Caco-2 (cell line): ENCODE measurements at regions of chr14 and their contacts with region 1.

Region 1: GRCh38 chr14:74349757-74350156 is 1.5 kb downstream of the VRTN start:
- DNase-seq: peak; percentile 90 to 94
- H3K4me3 ChIP-seq: peak overlapping the region; percentile 4; the same call in 1 of the 2 replicates
- H3K4me3 Mint-ChIP-seq: peak overlapping the region; percentile 65
- H3K27ac Mint-ChIP-seq: peak overlapping the region; percentile 84
- H3K4me1 ChIP-seq: peaks cover 50% of the 10 kb centered on the region
- H3K4me1 Mint-ChIP-seq: peaks cover 33% of the 10 kb centered on the region
- H3K27me3 ChIP-seq: no peaks in the 10 kb centered on the region
- H3K27me3 Mint-ChIP-seq: no peaks in the 10 kb centered on the region
- CTCF ChIP-seq: no peak

Region 2: GRCh38 chr14:74109369-74109768 is 240.4 kb before region 1 on chr14:
- CTCF ChIA-PET with region 1: no interaction called
- POLR2A ChIA-PET with region 1: no interaction called
- intact Hi-C with region 1: no loop called
- DNase-seq: no peak
- H3K4me3 ChIP-seq: no peak overlapping the region
- H3K4me3 Mint-ChIP-seq: no peak overlapping the region
- H3K27ac Mint-ChIP-seq: no peak overlapping the region
- H3K4me1 ChIP-seq: no peaks in the 10 kb centered on the region
- H3K4me1 Mint-ChIP-seq: no peaks in the 10 kb centered on the region
- H3K27me3 ChIP-seq: no peaks in the 10 kb centered on the region
- H3K27me3 Mint-ChIP-seq: no peaks in the 10 kb centered on the region
- CTCF ChIP-seq: no peak

Region 3: DNA sequence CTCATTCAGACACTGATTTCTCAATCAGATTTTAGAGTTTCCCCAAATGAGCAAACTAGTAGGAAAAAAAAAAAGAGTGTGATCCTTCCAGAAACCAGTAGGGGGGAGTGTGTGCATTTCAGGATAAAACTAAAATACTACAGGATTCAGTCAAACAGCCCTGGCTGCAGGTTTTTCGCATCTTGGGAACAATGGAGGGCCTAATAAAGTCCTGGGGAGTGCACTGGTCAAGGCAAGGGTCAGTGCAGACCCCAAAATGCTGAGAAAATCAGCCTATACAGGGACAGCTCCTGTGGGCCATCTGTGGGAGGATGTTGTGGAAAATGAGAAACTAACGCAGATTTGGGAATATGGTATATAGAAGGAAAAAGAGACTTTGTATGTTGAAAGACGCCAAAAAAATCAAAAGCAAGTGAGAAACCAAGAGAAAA is 24.8 kb before region 1 on chr14:
- CTCF ChIA-PET with region 1: interaction called, 4 read pairs
- POLR2A ChIA-PET with region 1: interaction called, 5 read pairs
- intact Hi-C with region 1: loop called (anchors 1 kb)
- DNase-seq: peak in 1 of 2 experiments; percentile 51
- H3K4me3 ChIP-seq: no peak overlapping the region
- H3K4me3 Mint-ChIP-seq: no peak overlapping the region
- H3K27ac Mint-ChIP-seq: no peak overlapping the region
- H3K4me1 ChIP-seq: peaks cover 8% of the 10 kb centered on the region
- H3K4me1 Mint-ChIP-seq: peaks cover 19% of the 10 kb centered on the region
- H3K27me3 ChIP-seq: no peaks in the 10 kb centered on the region
- H3K27me3 Mint-ChIP-seq: peaks cover 4% of the 10 kb centered on the region
- CTCF ChIP-seq: peak; percentile 76 to 78

Region 4: DNA sequence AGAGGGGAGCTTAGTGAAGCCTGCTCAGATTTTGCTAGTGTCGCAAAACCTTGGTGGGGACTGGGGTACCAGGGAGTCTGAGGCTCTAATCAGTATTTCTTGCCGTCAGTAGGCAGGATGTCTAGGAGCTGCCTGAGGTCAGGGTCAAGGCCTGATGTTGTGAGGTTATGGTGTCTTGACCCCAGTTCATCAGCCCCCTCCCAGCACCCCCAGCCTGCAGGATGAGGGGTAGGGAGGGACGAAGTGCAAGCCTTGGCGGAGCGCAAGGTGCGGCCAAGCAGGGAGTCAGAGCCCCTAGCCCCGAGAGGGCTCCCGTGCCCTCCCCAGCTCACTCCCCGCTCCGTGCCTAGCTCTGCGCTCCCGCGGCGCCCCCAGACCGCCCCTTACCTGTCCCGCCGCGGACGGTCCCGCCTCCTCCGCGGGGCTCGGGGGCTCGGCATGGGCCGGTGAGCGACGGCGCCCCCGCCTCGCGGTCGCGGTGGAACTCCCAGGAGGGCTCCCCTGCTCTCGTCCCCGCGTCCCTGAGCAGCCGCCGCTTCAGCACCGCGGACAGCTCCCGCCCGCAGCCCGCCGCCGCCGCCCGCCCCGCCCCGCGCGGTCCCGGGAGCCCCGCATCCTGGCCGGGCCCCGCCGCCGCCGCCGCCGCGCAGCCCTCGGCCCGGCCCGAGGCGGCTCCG is 75.9 kb after region 1 on chr14:
- CTCF ChIA-PET with region 1: no interaction called
- POLR2A ChIA-PET with region 1: interaction called, 12 read pairs
- intact Hi-C with region 1: no loop called
- DNase-seq: peak in 1 of 2 experiments; percentile 84
- H3K4me3 ChIP-seq: peak overlapping the region; percentile 24
- H3K4me3 Mint-ChIP-seq: no peak overlapping the region
- H3K27ac Mint-ChIP-seq: no peak overlapping the region
- H3K4me1 ChIP-seq: no peaks in the 10 kb centered on the region
- H3K4me1 Mint-ChIP-seq: no peaks in the 10 kb centered on the region
- H3K27me3 ChIP-seq: no peaks in the 10 kb centered on the region; the same call in 1 of the 2 replicates
- H3K27me3 Mint-ChIP-seq: peaks cover 12% of the 10 kb centered on the region
- CTCF ChIP-seq: no peak

Region 5: DNA sequence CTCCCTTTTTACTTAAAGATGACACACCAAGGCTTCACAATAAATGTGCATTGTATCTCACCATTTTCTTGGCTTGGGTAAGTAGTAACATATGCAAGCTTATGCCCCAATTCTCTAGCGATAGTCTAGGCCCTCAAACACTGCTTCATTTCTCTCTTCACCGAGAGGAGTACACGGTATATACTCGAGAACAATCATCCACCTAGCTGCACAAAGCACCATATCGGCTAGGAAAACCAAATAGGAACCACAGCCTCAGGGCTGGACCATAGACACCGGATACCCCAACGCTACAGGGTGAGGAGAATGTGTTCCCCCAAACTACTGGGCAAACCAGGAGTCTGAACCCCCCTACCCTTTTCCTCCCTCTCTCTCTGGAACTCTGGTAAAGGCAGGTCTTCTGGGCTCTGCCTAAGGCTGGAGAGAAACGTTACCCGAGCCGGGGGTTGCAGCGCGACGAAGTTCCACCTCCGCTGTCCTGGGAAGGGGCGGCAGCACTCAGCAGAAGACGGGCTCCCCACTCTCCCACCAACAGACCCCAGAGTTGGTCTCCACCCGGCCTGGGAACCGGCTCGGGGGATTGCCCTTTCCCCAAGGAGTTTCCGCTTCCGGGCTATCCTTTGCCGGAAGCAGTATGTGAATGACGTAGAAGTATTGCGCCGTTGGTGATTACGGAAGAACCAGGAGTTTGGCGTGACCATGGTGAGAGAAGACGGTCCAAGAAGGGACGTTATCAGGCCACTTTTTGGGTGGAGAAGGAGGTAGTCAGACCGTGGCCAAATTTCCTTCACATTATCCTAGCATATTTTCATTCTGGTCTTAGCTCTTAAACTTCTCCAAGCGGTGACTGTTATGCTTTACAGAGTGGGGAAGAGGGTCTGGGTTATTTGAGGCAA is 363.0 kb after region 1 on chr14 and contains the starts of genes AREL1 and FCF1:
- CTCF ChIA-PET with region 1: no interaction called
- POLR2A ChIA-PET with region 1: no interaction called
- intact Hi-C with region 1: no loop called
- DNase-seq: peak; percentile 83 to 85
- H3K4me3 ChIP-seq: peak within 1 kb of the TSS; percentile 72
- H3K4me3 Mint-ChIP-seq: peak within 1 kb of the TSS; percentile 91
- H3K27ac Mint-ChIP-seq: peak within 1 kb of the TSS; percentile 90
- H3K4me1 ChIP-seq: 0 out of 2 replicates have a peak, but pooled peaks cover 3% of the 10 kb centered on the region
- H3K4me1 Mint-ChIP-seq: no peaks in the 10 kb centered on the region
- H3K27me3 ChIP-seq: no peaks in the 10 kb centered on the region
- H3K27me3 Mint-ChIP-seq: no peaks in the 10 kb centered on the region
- CTCF ChIP-seq: no peak
- total RNA-seq, gene AREL1: 38.0 and 41.5 TPM in 2 replicates
- total RNA-seq, gene FCF1: 58.3 and 62.5 TPM in 2 replicates